Activated CD8-positive, alpha-beta T cell treated with anti-CD3 and anti-CD28 coated beads for 36 hours (primary cell): ENCODE measurements at regions of chr12 and their contacts with region 1.

Region 1: GRCh38 chr12:57452937-57453509 is 2.1 kb upstream of the INHBE start:
- DNase-seq: peak; percentile 81
- ATAC-seq: peak; percentile 48
- H3K4me3 Mint-ChIP-seq: peak overlapping the region; percentile 31
- H3K27ac Mint-ChIP-seq: peak overlapping the region; percentile 9
- H3K4me1 Mint-ChIP-seq: peaks cover 28% of the 10 kb centered on the region
- H3K27me3 Mint-ChIP-seq: no peaks in the 10 kb centered on the region
- CTCF ChIP-seq: peak; percentile 87

Region 2: GRCh38 chr12:57088459-57089248 is 364.4 kb before region 1 on chr12 and contains the start of gene NAB2:
- CTCF ChIA-PET with region 1: no interaction called
- POLR2A ChIA-PET with region 1: no interaction called
- intact Hi-C with region 1: no loop called
- DNase-seq: peak; percentile 93
- ATAC-seq: peak; percentile 45
- H3K4me3 Mint-ChIP-seq: peak within 1 kb of the TSS; percentile 90
- H3K27ac Mint-ChIP-seq: peak within 1 kb of the TSS; percentile 97
- H3K4me1 Mint-ChIP-seq: peaks cover 53% of the 10 kb centered on the region
- H3K27me3 Mint-ChIP-seq: no peaks in the 10 kb centered on the region
- CTCF ChIP-seq: no peak
- total RNA-seq, gene NAB2: 69.3 to 70.8 TPM

Region 3: GRCh38 chr12:57238854-57239554 is 214.0 kb before region 1 on chr12:
- CTCF ChIA-PET with region 1: interaction called, 45 read pairs
- POLR2A ChIA-PET with region 1: interaction called, 5 read pairs
- intact Hi-C with region 1: no loop called
- DNase-seq: peak; percentile 92
- ATAC-seq: peak; percentile 73
- H3K4me3 Mint-ChIP-seq: peak overlapping the region; percentile 83
- H3K27ac Mint-ChIP-seq: no peak overlapping the region
- H3K4me1 Mint-ChIP-seq: peaks cover 62% of the 10 kb centered on the region
- H3K27me3 Mint-ChIP-seq: peaks cover 39% of the 10 kb centered on the region
- CTCF ChIP-seq: peak; percentile 100

Region 4: GRCh38 chr12:57261428-57261865 is 191.6 kb before region 1 on chr12:
- CTCF ChIA-PET with region 1: interaction called, 24 read pairs
- POLR2A ChIA-PET with region 1: no interaction called
- intact Hi-C with region 1: loop called (anchors 5 kb)
- DNase-seq: no peak
- ATAC-seq: no peak
- H3K4me3 Mint-ChIP-seq: no peak overlapping the region
- H3K27ac Mint-ChIP-seq: no peak overlapping the region
- H3K4me1 Mint-ChIP-seq: peaks cover 4% of the 10 kb centered on the region
- H3K27me3 Mint-ChIP-seq: no peaks in the 10 kb centered on the region
- CTCF ChIP-seq: no peak

Region 5: DNA sequence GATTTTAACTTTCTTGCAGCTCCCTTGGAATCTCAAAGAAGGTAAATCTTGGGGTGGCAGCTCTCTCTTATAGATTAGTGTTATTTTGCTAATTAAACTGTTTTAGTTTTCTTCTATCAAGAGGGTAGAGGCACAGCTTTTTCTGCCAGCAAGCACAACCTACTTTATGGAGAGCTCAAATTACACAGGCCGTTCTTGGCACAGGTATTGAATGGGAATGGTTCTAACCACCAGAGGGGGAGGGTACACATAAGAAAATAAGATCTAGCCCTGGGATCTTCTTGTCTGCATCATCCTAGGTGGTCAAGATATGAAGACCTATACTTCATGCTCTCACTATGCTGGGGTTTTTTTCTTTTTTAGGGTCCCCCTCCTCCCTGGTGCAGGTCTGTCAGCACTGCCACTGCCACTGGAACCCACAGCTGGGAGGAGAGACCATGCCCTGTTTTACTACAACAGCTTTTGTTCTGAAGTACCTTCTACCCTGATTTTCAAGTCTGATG is 153.5 kb before region 1 on chr12:
- CTCF ChIA-PET with region 1: interaction called, 118 read pairs
- POLR2A ChIA-PET with region 1: no interaction called
- intact Hi-C with region 1: loop called (anchors 10 kb)
- DNase-seq: no peak
- ATAC-seq: no peak
- H3K4me3 Mint-ChIP-seq: no peak overlapping the region
- H3K27ac Mint-ChIP-seq: no peak overlapping the region
- H3K4me1 Mint-ChIP-seq: no peaks in the 10 kb centered on the region
- H3K27me3 Mint-ChIP-seq: no peaks in the 10 kb centered on the region
- CTCF ChIP-seq: no peak

Region 6: DNA sequence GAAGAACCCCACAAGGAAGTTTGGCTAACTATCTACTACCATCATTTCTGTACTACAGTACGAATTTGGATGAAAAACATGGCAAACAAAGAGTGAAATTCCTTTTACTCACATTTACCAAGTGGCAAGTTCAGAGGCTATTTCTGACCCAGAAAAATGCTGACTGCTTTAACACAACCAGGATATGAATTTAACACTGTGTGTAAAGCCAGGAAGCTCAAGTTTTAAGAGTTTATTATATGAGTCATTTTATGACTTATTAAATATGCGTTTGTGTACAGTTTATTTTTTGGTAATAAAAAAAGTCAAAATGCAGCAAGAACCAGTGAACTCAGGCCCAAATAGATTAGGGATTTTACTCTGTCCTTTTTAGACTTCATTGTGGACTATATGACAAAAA is 143.6 kb before region 1 on chr12:
- CTCF ChIA-PET with region 1: interaction called, 118 read pairs
- POLR2A ChIA-PET with region 1: interaction called, 4 read pairs
- intact Hi-C with region 1: loop called (anchors 10 kb)
- DNase-seq: no peak
- ATAC-seq: no peak
- H3K4me3 Mint-ChIP-seq: no peak overlapping the region
- H3K27ac Mint-ChIP-seq: no peak overlapping the region
- H3K4me1 Mint-ChIP-seq: no peaks in the 10 kb centered on the region
- H3K27me3 Mint-ChIP-seq: no peaks in the 10 kb centered on the region
- CTCF ChIP-seq: no peak

Region 7: DNA sequence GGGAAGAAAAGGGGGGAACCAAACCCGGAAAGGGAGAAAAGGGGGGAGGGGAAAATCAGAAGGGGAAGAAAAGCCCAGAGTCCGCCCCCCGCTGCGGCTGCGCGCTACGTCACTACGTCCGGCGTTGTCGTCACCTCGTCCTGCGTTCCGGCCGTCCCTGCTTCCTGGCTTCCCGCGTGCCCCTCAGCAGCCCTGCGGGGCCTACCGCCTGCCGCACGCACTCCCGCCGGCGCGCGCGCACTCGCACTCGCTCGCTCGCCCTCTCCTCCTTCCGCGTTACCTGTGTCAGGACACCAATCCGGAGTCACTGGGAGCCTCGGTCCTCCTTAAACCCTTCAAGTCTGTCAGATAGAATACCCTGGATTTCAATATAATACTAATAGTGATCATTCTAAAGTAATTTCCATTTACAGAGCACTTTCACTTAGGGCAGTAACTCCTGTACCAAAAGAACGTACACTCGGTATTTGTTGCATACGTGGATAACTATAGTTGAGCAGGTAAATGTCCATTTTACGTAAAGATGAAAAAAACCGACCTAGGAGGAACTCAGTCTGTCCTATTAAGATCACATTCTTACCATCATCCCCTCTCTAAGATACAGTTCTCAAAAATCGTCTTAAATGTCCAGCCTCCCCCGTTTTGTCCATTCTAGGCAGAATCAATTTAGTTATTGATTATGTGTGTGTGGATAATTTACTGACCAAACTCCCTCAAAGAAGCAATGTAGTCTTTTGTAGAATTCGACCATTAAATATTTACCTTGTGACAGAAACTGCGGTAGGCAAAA is 21.9 kb before region 1 on chr12 and contains the start of gene R3HDM2:
- CTCF ChIA-PET with region 1: interaction called, 29 read pairs
- POLR2A ChIA-PET with region 1: interaction called, 4 read pairs
- intact Hi-C with region 1: no loop called
- DNase-seq: peak; percentile 97
- ATAC-seq: peak; percentile 94
- H3K4me3 Mint-ChIP-seq: peak within 1 kb of the TSS; percentile 98
- H3K27ac Mint-ChIP-seq: peak within 1 kb of the TSS; percentile 100
- H3K4me1 Mint-ChIP-seq: peaks cover 41% of the 10 kb centered on the region
- H3K27me3 Mint-ChIP-seq: no peaks in the 10 kb centered on the region
- CTCF ChIP-seq: no peak
- total RNA-seq, gene R3HDM2: 33.2 to 44.0 TPM

Region 8: DNA sequence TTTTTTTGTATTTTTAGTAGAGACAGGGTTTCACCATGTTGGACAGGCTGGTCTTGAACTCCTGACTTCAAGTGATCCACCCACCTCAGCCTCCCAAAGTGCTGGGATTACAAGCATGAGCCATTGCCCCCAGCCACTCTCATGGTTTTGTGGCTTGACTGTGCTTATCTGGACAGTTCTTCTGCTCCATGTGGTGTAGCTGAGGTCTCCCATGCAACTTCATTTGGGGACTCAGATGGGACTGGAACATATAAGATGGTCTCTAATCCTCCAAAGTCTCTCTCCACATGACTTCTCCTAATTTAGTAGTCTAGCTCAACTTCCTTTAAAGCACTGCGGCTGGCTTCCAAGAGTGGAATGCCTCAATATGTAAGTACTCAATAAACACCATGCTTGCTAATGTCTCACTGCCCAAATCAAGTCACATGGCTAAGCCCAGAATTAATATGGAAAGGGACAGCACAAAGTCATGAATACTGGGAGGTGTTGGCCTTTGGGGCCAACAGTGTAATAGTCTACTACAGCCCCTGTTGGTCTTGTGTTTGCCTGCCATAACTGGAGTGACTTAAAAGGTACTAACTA is 11.1 kb before region 1 on chr12:
- CTCF ChIA-PET with region 1: interaction called, 26 read pairs
- POLR2A ChIA-PET with region 1: interaction called, 3 read pairs
- intact Hi-C with region 1: no loop called
- DNase-seq: no peak
- ATAC-seq: no peak
- H3K4me3 Mint-ChIP-seq: no peak overlapping the region
- H3K27ac Mint-ChIP-seq: no peak overlapping the region
- H3K4me1 Mint-ChIP-seq: no peaks in the 10 kb centered on the region
- H3K27me3 Mint-ChIP-seq: peaks cover 3% of the 10 kb centered on the region
- CTCF ChIP-seq: no peak

Region 9: GRCh38 chr12:57549909-57550640 is 97.1 kb after region 1 on chr12 and contains the start of gene KIF5A:
- CTCF ChIA-PET with region 1: no interaction called
- POLR2A ChIA-PET with region 1: no interaction called
- intact Hi-C with region 1: no loop called
- DNase-seq: peak; percentile 72
- ATAC-seq: peak; percentile 62
- H3K4me3 Mint-ChIP-seq: peak within 1 kb of the TSS; percentile 75
- H3K27ac Mint-ChIP-seq: no peak within 1 kb of the TSS
- H3K4me1 Mint-ChIP-seq: peaks cover 31% of the 10 kb centered on the region
- H3K27me3 Mint-ChIP-seq: peaks cover 4% of the 10 kb centered on the region
- CTCF ChIP-seq: no peak
- total RNA-seq, gene KIF5A: 1.2 to 1.3 TPM

Region 10: DNA sequence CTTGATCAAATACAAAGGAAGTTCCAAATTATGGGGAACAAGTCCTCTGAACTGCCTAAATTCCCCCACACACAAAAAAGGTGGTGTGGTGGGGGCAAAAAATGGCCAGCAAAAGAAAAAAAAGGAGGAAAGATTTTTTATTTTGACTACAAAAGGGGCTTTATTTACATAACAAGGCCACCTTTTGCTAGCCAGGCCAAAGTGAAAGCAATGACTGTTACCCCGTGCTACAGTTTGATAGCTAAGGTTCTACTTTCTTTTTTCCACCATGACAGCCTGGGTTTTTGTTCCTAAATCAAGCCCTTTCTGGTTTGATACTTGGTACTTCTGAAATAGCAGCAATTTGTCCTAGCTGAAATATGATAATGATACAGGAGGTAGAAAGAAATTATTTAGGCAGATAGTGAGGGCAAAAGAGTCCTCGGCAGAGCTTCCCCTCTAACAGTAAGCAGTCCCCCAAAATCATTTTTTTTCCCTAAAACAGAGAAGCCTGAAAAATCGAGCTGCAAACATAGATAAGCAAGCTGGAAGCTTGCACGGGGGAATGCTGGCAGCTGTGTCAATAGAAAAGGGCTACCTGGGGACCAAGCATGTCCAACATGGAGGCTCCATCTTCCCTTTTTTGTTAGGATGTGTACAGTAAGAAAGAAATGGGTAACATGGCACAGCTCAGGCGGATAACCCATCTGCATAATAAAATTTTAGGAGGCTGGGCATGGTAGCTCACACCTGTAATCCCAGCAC is 188.8 kb after region 1 on chr12:
- CTCF ChIA-PET with region 1: no interaction called
- POLR2A ChIA-PET with region 1: no interaction called
- intact Hi-C with region 1: no loop called
- DNase-seq: no peak
- ATAC-seq: no peak
- H3K4me3 Mint-ChIP-seq: no peak overlapping the region
- H3K27ac Mint-ChIP-seq: no peak overlapping the region
- H3K4me1 Mint-ChIP-seq: no peaks in the 10 kb centered on the region
- H3K27me3 Mint-ChIP-seq: peaks cover 3% of the 10 kb centered on the region
- CTCF ChIP-seq: no peak

Region 11: GRCh38 chr12:57771708-57772428 is 318.8 kb after region 1 on chr12 and contains the start of gene METTL1:
- CTCF ChIA-PET with region 1: no interaction called
- POLR2A ChIA-PET with region 1: no interaction called
- intact Hi-C with region 1: no loop called
- DNase-seq: peak; percentile 98
- ATAC-seq: peak; percentile 89
- H3K4me3 Mint-ChIP-seq: peak within 1 kb of the TSS; percentile 99
- H3K27ac Mint-ChIP-seq: peak within 1 kb of the TSS; percentile 99
- H3K4me1 Mint-ChIP-seq: peaks cover 13% of the 10 kb centered on the region
- H3K27me3 Mint-ChIP-seq: no peaks in the 10 kb centered on the region
- CTCF ChIP-seq: no peak
- total RNA-seq, gene METTL1: 29.6 to 34.1 TPM